H1 (cell line): ENCODE measurements at regions of chr17 and their contacts with region 1.

Region 1: DNA sequence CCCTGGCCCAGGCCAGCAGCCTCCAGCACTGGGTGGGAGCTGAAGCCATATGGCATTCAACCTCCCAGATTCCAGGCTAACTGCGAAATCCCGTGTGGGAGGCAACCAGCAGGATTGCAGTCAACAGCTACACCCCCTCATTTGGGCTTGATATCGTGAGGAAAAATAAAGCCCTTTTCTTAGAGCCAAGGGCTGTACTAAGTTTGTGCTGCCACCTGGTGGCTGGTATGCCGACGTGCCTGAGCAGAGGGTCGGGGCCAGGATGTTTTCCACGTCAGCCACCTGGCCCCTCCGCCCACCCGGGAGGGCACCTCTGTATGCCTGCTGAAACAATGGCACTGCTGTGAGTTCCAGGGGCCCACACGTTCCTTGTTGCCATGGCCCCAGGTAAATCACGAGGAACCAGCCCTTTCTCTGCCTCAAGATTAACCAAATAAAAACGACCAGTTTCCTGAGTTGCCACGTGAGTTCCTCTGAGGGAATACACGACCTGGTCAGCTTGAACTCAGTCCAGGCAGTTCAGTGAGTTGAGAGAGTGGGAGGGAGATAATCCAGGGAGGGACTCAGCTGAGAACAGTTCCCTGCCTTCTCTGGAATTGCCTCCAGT is 9.0 kb downstream of the TMEM98 start:
- DNase-seq: peak; percentile 77 to 94
- H3K4me3 ChIP-seq: peak overlapping the region in 1 of 4 experiments; percentile 30; a peak in 1 of 8 replicates
- H3K27ac ChIP-seq: peak overlapping the region; percentile 89
- H3K4me1 ChIP-seq: peaks cover 2 to 7% (median 4%) of the 10 kb centered on the region in 4 experiments; a peak in 6 of 7 replicates
- H3K27me3 ChIP-seq: no peaks in the 10 kb centered on the region
- CTCF ChIP-seq: peak; percentile 76 to 97 (median 87)
- EP300 ChIP-seq: peak in 1 of 2 experiments; percentile 90; a peak in 1 of 3 replicates
- POLR2A ChIP-seq: 0 out of 3 replicates have a peak, but pooled peaks of 1 of the 2 experiments have one; percentile 33
- RAD21 ChIP-seq: peak; percentile 65 to 80

Region 2: GRCh38 chr17:32794533-32795246 is 142.3 kb before region 1 on chr17:
- CTCF ChIA-PET with region 1: interaction called, 23 read pairs
- POLR2A ChIA-PET with region 1: interaction called, 3 read pairs
- DNase-seq: no peak
- H3K4me3 ChIP-seq: no peak overlapping the region
- H3K27ac ChIP-seq: no peak overlapping the region
- H3K4me1 ChIP-seq: no peaks in the 10 kb centered on the region
- H3K27me3 ChIP-seq: no peaks in the 10 kb centered on the region
- CTCF ChIP-seq: no peak
- EP300 ChIP-seq: no peak
- POLR2A ChIP-seq: no peak
- RAD21 ChIP-seq: no peak

Region 3: GRCh38 chr17:32915245-32915644 is 21.8 kb before region 1 on chr17:
- CTCF ChIA-PET with region 1: interaction called, 14 read pairs
- POLR2A ChIA-PET with region 1: interaction called, 3 read pairs
- DNase-seq: no peak
- H3K4me3 ChIP-seq: no peak overlapping the region
- H3K27ac ChIP-seq: no peak overlapping the region
- H3K4me1 ChIP-seq: peaks cover 3 to 12% (median 4%) of the 10 kb centered on the region in 4 experiments; a peak in 5 of 7 replicates
- H3K27me3 ChIP-seq: no peaks in the 10 kb centered on the region
- CTCF ChIP-seq: no peak
- EP300 ChIP-seq: no peak
- POLR2A ChIP-seq: no peak
- RAD21 ChIP-seq: no peak

Region 4: DNA sequence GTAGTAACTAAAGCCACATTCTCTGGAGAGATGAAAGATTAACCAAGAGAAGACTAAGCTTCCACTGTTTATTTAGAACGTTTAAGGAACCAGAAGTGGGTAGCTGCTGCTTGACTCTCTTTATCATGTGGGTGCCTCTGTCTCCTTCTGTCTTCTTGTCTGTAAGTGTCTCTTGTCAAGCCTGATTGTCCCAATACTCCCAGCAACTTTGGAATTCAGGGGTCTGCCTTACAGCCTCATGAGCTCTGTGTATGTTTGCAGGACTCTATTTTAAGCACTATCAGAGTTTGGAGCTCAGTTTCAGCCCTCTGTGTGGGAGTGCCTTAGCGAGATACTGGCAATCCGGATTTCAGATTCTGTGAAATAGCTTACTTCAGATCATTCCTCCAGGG is 25.3 kb after region 1 on chr17:
- CTCF ChIA-PET with region 1: interaction called, 13 read pairs
- POLR2A ChIA-PET with region 1: no interaction called
- DNase-seq: no peak
- H3K4me3 ChIP-seq: no peak overlapping the region
- H3K27ac ChIP-seq: no peak overlapping the region
- H3K4me1 ChIP-seq: no peaks in the 10 kb centered on the region
- H3K27me3 ChIP-seq: no peaks in the 10 kb centered on the region
- CTCF ChIP-seq: no peak
- EP300 ChIP-seq: no peak
- POLR2A ChIP-seq: no peak
- RAD21 ChIP-seq: no peak

Region 5: DNA sequence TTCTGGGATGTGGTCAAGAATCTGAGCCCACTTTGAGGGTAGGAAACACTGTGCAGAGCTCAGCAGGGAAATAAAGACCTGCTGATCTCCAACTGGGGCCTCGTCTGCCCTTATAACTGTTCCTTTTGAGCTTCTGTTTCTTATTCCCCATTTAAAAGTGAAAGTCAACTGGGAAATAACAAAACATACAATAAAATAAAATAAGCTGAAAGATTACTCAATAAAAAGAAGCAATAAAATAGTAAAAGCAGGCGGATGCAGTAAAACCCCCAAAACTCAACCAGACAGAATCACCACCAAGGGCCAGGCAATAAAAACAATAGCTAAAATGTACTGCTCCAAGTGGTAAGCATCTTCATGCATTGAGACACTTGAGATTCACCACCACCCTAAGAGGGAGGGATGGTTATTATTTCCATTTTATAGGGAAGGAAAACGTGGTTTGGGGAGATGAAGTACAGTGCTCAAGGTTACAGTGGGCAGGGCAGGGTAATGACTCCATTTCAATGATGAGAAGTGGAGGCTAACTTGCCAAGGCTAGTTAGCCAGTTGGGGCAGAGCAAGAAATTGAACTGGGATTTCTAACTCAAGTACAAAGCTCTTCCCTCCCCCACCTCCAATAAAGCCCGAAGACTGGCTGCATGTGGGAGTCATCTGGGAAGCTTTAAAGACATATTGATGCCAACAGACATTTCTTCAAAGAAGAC is 48.2 kb after region 1 on chr17:
- CTCF ChIA-PET with region 1: no interaction called
- POLR2A ChIA-PET with region 1: no interaction called
- DNase-seq: no peak
- H3K4me3 ChIP-seq: no peak overlapping the region
- H3K27ac ChIP-seq: no peak overlapping the region
- H3K4me1 ChIP-seq: no peaks in the 10 kb centered on the region
- H3K27me3 ChIP-seq: no peaks in the 10 kb centered on the region
- CTCF ChIP-seq: no peak
- EP300 ChIP-seq: no peak
- POLR2A ChIP-seq: no peak
- RAD21 ChIP-seq: no peak